ENCODE measurements at regions of chr3 and their contacts with region 1.

Region 1: GRCh38 chr3:138118612-138119422 is 3.4 kb upstream of the DZIP1L start:
- DNase-seq: peak; percentile 71

Region 2: GRCh38 chr3:137768361-137769321 is 350.2 kb before region 1 on chr3:
- CTCF ChIA-PET with region 1: no interaction called
- POLR2A ChIA-PET with region 1: no interaction called
- DNase-seq: no peak

Region 3: GRCh38 chr3:138068579-138069174 is 50.1 kb before region 1 on chr3:
- CTCF ChIA-PET with region 1: interaction called, 21 read pairs
- POLR2A ChIA-PET with region 1: interaction called, 5 read pairs
- DNase-seq: peak; percentile 88

Region 4: GRCh38 chr3:138174421-138175122 is 55.8 kb after region 1 on chr3 and contains the start of gene DBR1:
- CTCF ChIA-PET with region 1: interaction called, 6 read pairs
- POLR2A ChIA-PET with region 1: interaction called, 13 read pairs
- DNase-seq: peak; percentile 83

Region 5: GRCh38 chr3:138455801-138456716 is 337.2 kb after region 1 on chr3:
- CTCF ChIA-PET with region 1: no interaction called
- POLR2A ChIA-PET with region 1: no interaction called
- DNase-seq: no peak

Measured in HEK293T (cell line).